ENCODE measurements at regions of chr16 and their contacts with region 1.

Region 1: DNA sequence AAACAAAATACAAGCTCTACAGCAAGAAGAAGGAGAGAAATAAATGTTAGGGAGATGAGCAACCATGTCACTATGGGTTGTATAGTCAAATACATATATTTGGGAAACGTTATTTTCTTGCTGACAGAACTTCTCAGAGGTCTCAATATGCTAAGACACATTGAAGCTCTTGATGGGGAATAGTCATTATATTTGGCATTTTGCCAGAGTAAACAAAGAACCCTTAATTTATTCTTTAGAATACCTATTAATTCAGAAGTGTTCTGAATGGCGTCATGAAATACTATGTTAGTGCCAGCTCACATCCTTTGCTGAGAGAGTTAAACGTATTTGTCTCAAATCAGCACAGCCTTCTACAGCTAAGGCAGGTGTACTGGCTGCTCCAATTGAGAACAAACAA is 458.9 kb downstream of the CDH13 start:
- DNase-seq: no peak
- ATAC-seq: no peak
- H3K4me3 ChIP-seq: no peak overlapping the region
- H3K27ac ChIP-seq: no peak overlapping the region
- H3K4me1 ChIP-seq: no peaks in the 10 kb centered on the region
- H3K27me3 ChIP-seq: no peaks in the 10 kb centered on the region
- CTCF ChIP-seq: no peak

Region 2: DNA sequence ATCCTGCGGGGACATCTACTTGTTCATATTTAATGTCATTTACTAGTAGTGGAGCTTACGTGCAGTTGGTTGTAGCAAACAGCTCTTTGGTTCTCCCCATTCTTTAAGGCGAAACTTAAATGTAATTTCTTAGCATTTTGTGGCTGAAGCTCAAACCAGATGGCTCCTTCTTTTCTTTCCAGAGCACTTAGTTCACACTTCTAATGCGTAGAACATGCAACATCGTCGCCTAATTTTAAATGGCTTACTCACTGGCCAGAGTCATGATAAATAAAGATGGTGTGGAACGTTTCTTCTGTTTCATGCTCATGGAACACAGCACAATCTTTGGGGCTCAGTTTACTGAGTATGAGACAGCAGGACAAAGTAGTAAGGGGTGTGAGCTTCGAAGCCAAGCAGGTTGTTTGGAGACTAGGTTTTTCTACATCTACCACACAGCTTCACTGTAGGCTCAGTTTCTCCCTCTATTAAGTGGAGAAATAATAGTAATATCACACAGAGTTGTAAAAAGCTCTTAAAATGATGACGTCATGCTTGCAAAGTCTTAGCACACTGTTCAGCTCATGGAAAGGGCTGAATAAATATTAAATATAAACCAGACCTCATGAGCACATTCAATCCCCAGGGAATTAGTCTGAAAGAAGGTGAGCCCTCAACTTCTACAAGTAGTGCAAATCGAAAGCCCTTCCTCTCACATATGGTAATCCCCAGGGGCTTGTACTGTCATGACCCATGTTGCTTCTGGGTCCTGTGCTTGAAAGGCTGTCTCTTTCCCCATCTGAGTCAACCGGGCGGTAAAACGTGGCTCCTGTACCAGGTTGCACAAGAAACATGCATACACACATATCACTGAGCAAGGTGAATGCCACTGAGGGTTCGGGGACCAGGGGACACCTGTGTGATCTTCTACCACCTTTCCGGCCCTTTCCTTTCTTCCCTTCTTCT is 74.6 kb before region 1 on chr16:
- intact Hi-C with region 1: loop called in 1 of 2 experiments (anchors 10 kb)
- DNase-seq: no peak
- ATAC-seq: no peak
- H3K4me3 ChIP-seq: no peak overlapping the region
- H3K27ac ChIP-seq: no peak overlapping the region
- H3K4me1 ChIP-seq: no peaks in the 10 kb centered on the region
- H3K27me3 ChIP-seq: no peaks in the 10 kb centered on the region
- CTCF ChIP-seq: no peak

Region 3: GRCh38 chr16:83130039-83130438 is 44.4 kb after region 1 on chr16:
- intact Hi-C with region 1: no loop called
- DNase-seq: no peak
- ATAC-seq: no peak
- H3K4me3 ChIP-seq: no peak overlapping the region
- H3K27ac ChIP-seq: no peak overlapping the region
- H3K4me1 ChIP-seq: no peaks in the 10 kb centered on the region
- H3K27me3 ChIP-seq: no peaks in the 10 kb centered on the region
- CTCF ChIP-seq: no peak

Region 4: GRCh38 chr16:83143788-83144187 is 58.1 kb after region 1 on chr16:
- intact Hi-C with region 1: loop called in 1 of 2 experiments (anchors 10 kb)
- DNase-seq: no peak
- ATAC-seq: no peak
- H3K4me3 ChIP-seq: no peak overlapping the region
- H3K27ac ChIP-seq: no peak overlapping the region
- H3K4me1 ChIP-seq: no peaks in the 10 kb centered on the region
- H3K27me3 ChIP-seq: no peaks in the 10 kb centered on the region
- CTCF ChIP-seq: no peak